ENCODE measurements at regions of chrX and their contacts with region 1.

Region 1: GRCh38 chrX:136147315-136147901 is at the start of gene FHL1:
- DNase-seq: peak; percentile 12 to 59 (median 45)
- ATAC-seq: peak; percentile 86
- H3K4me3 ChIP-seq: peak within 1 kb of the TSS; percentile 55
- H3K4me3 Mint-ChIP-seq: peak within 1 kb of the TSS; percentile 82 to 94 (median 89)
- H3K27ac ChIP-seq: peak within 1 kb of the TSS; percentile 56
- H3K27ac Mint-ChIP-seq: peak within 1 kb of the TSS; percentile 73 to 97 (median 91)
- H3K4me1 ChIP-seq: peaks cover 0 to 17% of the 10 kb centered on the region in 2 donors
- H3K4me1 Mint-ChIP-seq: peaks cover 23 to 54% (median 41%) of the 10 kb centered on the region in 7 donors
- H3K27me3 ChIP-seq: no peaks in the 10 kb centered on the region
- H3K27me3 Mint-ChIP-seq: peaks cover 0 to 14% (median 0%) of the 10 kb centered on the region in 5 donors
- total RNA-seq, gene FHL1: 14.9 to 26.4 (median 22.4) TPM

Region 2: GRCh38 chrX:134512566-134512965 is 1634.8 kb before region 1 on chrX:
- CTCF ChIA-PET with region 1: no interaction called
- POLR2A ChIA-PET with region 1: no interaction called
- intact Hi-C with region 1: no loop called
- DNase-seq: no peak
- ATAC-seq: no peak
- H3K4me3 ChIP-seq: no peak overlapping the region
- H3K4me3 Mint-ChIP-seq: no peak overlapping the region
- H3K27ac ChIP-seq: no peak overlapping the region
- H3K27ac Mint-ChIP-seq: no peak overlapping the region
- H3K4me1 ChIP-seq: no peaks in the 10 kb centered on the region
- H3K4me1 Mint-ChIP-seq: no peaks in the 10 kb centered on the region
- H3K27me3 ChIP-seq: no peaks in the 10 kb centered on the region
- H3K27me3 Mint-ChIP-seq: no peaks in the 10 kb centered on the region

Region 3: GRCh38 chrX:135985141-135985972 is 162.1 kb before region 1 on chrX and contains the start of gene SLC9A6:
- CTCF ChIA-PET with region 1: no interaction called
- POLR2A ChIA-PET with region 1: interaction called, 3 read pairs
- intact Hi-C with region 1: loop called (anchors 5 kb)
- DNase-seq: peak; percentile 26 to 75 (median 52)
- ATAC-seq: peak; percentile 96
- H3K4me3 ChIP-seq: peak within 1 kb of the TSS; percentile 73
- H3K4me3 Mint-ChIP-seq: peak within 1 kb of the TSS; percentile 79 to 95 (median 92)
- H3K27ac ChIP-seq: peak within 1 kb of the TSS; percentile 76
- H3K27ac Mint-ChIP-seq: peak within 1 kb of the TSS; percentile 80 to 99 (median 93)
- H3K4me1 ChIP-seq: peaks cover 20 to 23% of the 10 kb centered on the region in 2 donors
- H3K4me1 Mint-ChIP-seq: peaks cover 40 to 78% (median 61%) of the 10 kb centered on the region in 7 donors
- H3K27me3 ChIP-seq: no peaks in the 10 kb centered on the region
- H3K27me3 Mint-ChIP-seq: no peaks in the 10 kb centered on the region
- total RNA-seq, gene SLC9A6: 16.2 to 21.1 (median 18.9) TPM

Region 4: DNA sequence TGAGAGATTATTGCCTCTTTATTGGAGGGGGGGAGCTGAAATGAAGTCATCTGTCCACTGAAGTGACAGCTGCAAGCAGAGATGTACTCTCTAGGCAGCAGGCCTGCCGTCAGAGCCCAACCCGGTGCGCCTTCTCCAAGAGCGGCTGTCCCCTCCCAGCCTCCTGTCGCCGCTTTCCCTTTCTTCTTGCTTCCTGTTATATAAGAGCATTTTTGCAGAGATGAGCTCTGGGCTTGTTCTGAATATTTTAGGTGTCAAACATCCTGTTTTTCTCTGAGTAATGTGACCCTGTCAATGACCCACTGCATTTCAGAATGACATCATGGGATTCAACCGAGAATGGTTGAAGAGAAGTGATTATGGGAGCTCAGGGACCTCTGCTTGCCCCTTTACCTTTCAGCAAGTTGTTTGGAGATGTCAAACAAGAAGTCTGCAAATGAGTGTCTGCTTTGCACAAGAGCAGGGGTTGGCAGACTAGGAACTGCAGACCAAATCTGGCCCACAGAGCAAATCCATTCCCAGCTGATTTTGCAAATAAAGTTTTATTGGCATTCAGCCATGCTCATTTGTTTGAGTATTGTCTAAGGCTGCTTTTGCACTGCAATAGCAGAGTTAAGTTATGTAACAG is 82.2 kb before region 1 on chrX:
- CTCF ChIA-PET with region 1: no interaction called
- POLR2A ChIA-PET with region 1: no interaction called
- intact Hi-C with region 1: loop called in 1 of 2 experiments (anchors 2 kb)
- DNase-seq: peak in 7 of 9 donors; percentile 52 to 83 (median 76)
- ATAC-seq: peak; percentile 85
- H3K4me3 ChIP-seq: no peak overlapping the region
- H3K4me3 Mint-ChIP-seq: peak overlapping the region; percentile 48 to 80 (median 63)
- H3K27ac ChIP-seq: peak overlapping the region; percentile 61
- H3K27ac Mint-ChIP-seq: peak overlapping the region; percentile 70 to 98 (median 96)
- H3K4me1 ChIP-seq: peaks cover 0 to 26% of the 10 kb centered on the region in 2 donors
- H3K4me1 Mint-ChIP-seq: peaks cover 9 to 42% (median 31%) of the 10 kb centered on the region in 7 donors
- H3K27me3 ChIP-seq: no peaks in the 10 kb centered on the region
- H3K27me3 Mint-ChIP-seq: no peaks in the 10 kb centered on the region

Region 5: DNA sequence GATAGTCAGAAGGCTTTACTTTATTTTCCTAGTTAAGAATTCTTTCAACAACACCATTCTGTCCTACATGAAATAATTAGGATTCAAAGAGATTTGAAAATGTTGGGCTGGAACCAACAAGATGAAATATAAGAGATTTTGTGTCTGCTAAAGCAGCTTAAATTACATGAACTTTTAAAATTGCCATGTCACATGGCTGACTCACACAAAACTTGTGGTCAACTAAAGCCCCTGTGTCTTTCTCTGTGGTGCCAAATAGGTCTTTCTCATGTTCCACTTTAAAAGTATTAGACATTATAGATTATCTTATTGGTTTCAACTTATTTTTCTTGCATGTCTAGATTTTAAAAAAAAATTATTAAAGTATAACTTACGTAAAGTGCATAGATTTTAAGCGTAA is 60.9 kb before region 1 on chrX:
- CTCF ChIA-PET with region 1: no interaction called
- POLR2A ChIA-PET with region 1: no interaction called
- intact Hi-C with region 1: no loop called
- DNase-seq: no peak
- ATAC-seq: no peak
- H3K4me3 ChIP-seq: no peak overlapping the region
- H3K4me3 Mint-ChIP-seq: no peak overlapping the region
- H3K27ac ChIP-seq: no peak overlapping the region
- H3K27ac Mint-ChIP-seq: no peak overlapping the region
- H3K4me1 ChIP-seq: no peaks in the 10 kb centered on the region
- H3K4me1 Mint-ChIP-seq: no peaks in the 10 kb centered on the region
- H3K27me3 ChIP-seq: no peaks in the 10 kb centered on the region
- H3K27me3 Mint-ChIP-seq: peaks cover 0 to 4% (median 0%) of the 10 kb centered on the region in 5 donors

Region 6: DNA sequence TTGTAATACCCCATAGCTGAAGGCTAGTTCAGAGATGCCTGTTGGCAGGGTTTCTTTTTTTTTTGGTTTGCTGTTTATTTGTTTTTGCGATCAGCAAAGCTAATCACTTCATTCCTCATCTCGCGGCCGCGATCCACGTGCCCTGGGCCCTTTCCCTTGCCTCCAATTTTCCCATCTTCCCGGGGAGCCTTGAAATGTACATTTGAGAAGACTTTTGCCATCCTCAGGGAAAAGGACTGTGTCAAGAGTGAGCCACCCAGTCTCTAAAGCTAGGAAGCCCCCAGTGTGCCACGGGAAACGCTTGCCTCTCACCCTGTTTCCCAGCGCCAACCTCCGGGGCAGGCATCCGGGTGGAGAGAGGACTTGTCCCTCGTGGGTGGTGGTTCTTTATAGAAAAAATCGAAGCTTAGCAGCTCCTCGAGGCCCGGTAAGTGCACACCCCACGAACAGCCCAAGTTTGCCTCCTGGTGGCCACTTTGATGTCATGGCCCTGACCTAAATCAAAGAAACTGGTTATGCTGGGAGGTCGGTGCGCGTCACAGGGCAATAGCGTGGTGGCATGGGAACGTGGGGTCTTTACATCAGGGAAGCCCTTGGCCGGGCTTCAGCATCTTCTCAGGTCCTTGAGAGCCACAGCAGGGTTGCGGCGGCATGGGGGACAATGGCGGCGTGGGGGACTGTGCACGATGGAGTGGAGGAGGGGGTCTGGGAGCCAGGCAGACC is 61.8 kb after region 1 on chrX:
- CTCF ChIA-PET with region 1: no interaction called
- POLR2A ChIA-PET with region 1: no interaction called
- intact Hi-C with region 1: loop called in 1 of 2 experiments (anchors 10 kb)
- DNase-seq: peak in 7 of 9 donors; percentile 18 to 45 (median 33)
- ATAC-seq: peak; percentile 70
- H3K4me3 ChIP-seq: no peak overlapping the region
- H3K4me3 Mint-ChIP-seq: no peak overlapping the region
- H3K27ac ChIP-seq: no peak overlapping the region
- H3K27ac Mint-ChIP-seq: peak overlapping the region in 2 of 9 donors; percentile 70
- H3K4me1 ChIP-seq: peaks cover 11 to 15% of the 10 kb centered on the region in 2 donors
- H3K4me1 Mint-ChIP-seq: peaks cover 6 to 16% (median 10%) of the 10 kb centered on the region in 7 donors
- H3K27me3 ChIP-seq: no peaks in the 10 kb centered on the region
- H3K27me3 Mint-ChIP-seq: no peaks in the 10 kb centered on the region